CD8-positive, alpha-beta T cell (primary cell): ENCODE measurements at regions of chr10 and their contacts with region 1.

Region 1: DNA sequence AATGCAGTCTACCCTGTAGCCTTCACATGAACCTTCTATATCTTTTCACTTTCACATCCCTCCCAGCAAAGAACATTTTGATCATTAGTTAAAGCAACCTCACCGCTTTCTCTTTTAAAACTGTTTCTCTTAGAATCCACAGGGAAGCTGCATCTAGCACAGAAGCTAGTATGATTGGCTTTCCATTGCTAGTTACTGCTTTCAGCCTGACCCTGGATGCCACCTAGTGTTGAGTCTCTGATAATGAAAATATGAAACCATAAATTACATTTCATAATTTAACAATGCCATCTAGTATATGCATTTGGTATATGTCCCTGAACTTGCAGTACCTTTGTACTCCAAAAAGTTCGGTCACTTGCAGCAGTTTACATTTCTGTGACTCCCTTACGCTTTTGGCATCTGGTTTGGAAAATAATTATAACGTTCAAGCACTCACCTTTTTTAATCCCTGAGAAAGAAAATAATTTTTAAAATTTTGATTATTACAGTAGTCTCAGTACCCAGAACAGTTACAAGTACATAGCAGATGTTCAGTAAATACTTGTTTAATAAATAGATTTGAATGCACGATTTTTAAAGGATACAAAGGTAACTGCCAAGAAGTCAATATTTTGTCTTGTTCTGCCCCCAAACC is 22.7 kb downstream of the CISD1 start:
- DNase-seq: peak in 6 of 9 experiments; percentile 14 to 67 (median 28)
- ATAC-seq: peak; percentile 73
- H3K4me3 ChIP-seq: no peak overlapping the region
- H3K4me3 Mint-ChIP-seq: no peak overlapping the region
- H3K27ac ChIP-seq: no peak overlapping the region
- H3K27ac Mint-ChIP-seq: no peak overlapping the region
- H3K4me1 ChIP-seq: no peaks in the 10 kb centered on the region
- H3K4me1 Mint-ChIP-seq: no peaks in the 10 kb centered on the region
- H3K27me3 ChIP-seq: no peaks in the 10 kb centered on the region
- H3K27me3 Mint-ChIP-seq: no peaks in the 10 kb centered on the region
- CTCF ChIP-seq: peak; percentile 83

Region 2: DNA sequence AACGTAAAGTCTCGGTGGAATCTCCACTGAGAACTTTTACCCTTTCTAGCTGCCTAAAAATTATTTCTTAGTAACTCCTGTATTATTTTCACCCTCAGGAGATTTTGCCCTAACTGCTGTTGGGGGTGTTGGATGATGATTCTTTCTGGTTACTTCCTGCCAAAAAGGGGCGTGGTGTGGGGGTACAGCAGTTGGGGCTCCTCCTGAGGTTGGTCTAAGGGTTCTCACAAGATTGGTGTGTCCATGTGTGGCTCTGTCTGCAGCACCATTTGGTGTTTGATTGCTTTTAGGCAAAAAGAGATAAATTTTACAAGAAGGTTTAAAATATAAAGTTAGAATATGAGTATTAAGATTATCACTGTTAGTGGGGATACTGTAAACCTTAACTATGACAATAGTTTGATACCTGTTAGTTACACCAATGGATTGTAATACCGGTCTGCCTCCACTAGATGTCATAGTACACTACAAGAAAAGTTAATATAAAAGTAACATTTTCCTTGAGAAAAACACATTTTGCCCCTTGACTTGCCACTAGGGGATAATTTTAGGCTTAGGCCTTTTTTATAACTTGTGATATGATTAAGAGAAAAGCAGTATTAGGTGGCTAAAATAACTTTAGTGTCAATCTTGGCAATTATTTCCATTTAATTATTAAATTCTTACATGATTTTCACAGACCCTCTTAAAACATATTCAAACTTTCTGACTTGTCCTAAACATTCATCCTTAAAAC is 952.7 kb before region 1 on chr10:
- CTCF ChIA-PET with region 1: no interaction called
- POLR2A ChIA-PET with region 1: no interaction called
- intact Hi-C with region 1: loop called in 1 of 2 experiments (anchors 5 kb)
- DNase-seq: peak in 2 of 9 experiments; percentile 2 to 9
- ATAC-seq: no peak
- H3K4me3 ChIP-seq: no peak overlapping the region
- H3K4me3 Mint-ChIP-seq: no peak overlapping the region
- H3K27ac ChIP-seq: no peak overlapping the region
- H3K27ac Mint-ChIP-seq: no peak overlapping the region
- H3K4me1 ChIP-seq: no peaks in the 10 kb centered on the region
- H3K4me1 Mint-ChIP-seq: no peaks in the 10 kb centered on the region
- H3K27me3 ChIP-seq: no peaks in the 10 kb centered on the region
- H3K27me3 Mint-ChIP-seq: no peaks in the 10 kb centered on the region
- CTCF ChIP-seq: peak; percentile 34

Region 3: GRCh38 chr10:58177362-58177947 is 114.2 kb before region 1 on chr10:
- CTCF ChIA-PET with region 1: interaction called, 134 read pairs
- POLR2A ChIA-PET with region 1: no interaction called
- intact Hi-C with region 1: loop called (anchors 1 kb)
- DNase-seq: peak in 2 of 9 experiments; percentile 13 to 48
- ATAC-seq: no peak
- H3K4me3 ChIP-seq: no peak overlapping the region
- H3K4me3 Mint-ChIP-seq: no peak overlapping the region
- H3K27ac ChIP-seq: no peak overlapping the region
- H3K27ac Mint-ChIP-seq: no peak overlapping the region
- H3K4me1 ChIP-seq: no peaks in the 10 kb centered on the region
- H3K4me1 Mint-ChIP-seq: no peaks in the 10 kb centered on the region
- H3K27me3 ChIP-seq: no peaks in the 10 kb centered on the region
- H3K27me3 Mint-ChIP-seq: peaks cover 7% of the 10 kb centered on the region
- CTCF ChIP-seq: peak; percentile 71

Region 4: DNA sequence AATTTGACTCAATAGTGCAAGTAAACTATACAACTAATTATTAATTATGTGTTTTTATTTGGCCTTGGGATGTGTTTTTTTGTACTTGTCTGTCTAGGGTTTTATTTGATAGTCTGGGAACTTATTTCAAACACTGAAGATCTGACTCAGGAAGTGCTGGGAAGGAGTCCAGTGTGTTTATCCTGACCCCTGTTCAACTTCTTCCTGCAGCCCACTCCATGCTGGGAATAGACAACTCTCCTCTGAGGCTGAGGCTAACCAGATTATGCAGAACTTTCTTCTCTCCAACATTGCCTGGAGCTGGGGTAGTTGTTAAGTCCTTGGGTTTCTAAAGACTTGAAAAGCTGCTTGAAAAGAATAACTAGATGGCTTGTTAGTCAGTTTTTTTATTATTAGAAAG is 15.7 kb before region 1 on chr10:
- CTCF ChIA-PET with region 1: interaction called, 10 read pairs
- POLR2A ChIA-PET with region 1: interaction called, 3 read pairs
- intact Hi-C with region 1: no loop called
- DNase-seq: no peak
- ATAC-seq: no peak
- H3K4me3 ChIP-seq: no peak overlapping the region
- H3K4me3 Mint-ChIP-seq: no peak overlapping the region
- H3K27ac ChIP-seq: no peak overlapping the region
- H3K27ac Mint-ChIP-seq: no peak overlapping the region
- H3K4me1 ChIP-seq: no peaks in the 10 kb centered on the region
- H3K4me1 Mint-ChIP-seq: peaks cover 3% of the 10 kb centered on the region
- H3K27me3 ChIP-seq: no peaks in the 10 kb centered on the region
- H3K27me3 Mint-ChIP-seq: no peaks in the 10 kb centered on the region
- CTCF ChIP-seq: no peak

Region 5: GRCh38 chr10:58305821-58306220 is 14.2 kb after region 1 on chr10:
- CTCF ChIA-PET with region 1: interaction called, 21 read pairs
- POLR2A ChIA-PET with region 1: no interaction called
- intact Hi-C with region 1: no loop called
- DNase-seq: no peak
- ATAC-seq: no peak
- H3K4me3 ChIP-seq: no peak overlapping the region
- H3K4me3 Mint-ChIP-seq: no peak overlapping the region
- H3K27ac ChIP-seq: no peak overlapping the region
- H3K27ac Mint-ChIP-seq: no peak overlapping the region
- H3K4me1 ChIP-seq: no peaks in the 10 kb centered on the region
- H3K4me1 Mint-ChIP-seq: no peaks in the 10 kb centered on the region
- H3K27me3 ChIP-seq: peaks cover 0 to 8% of the 10 kb centered on the region in 2 experiments
- H3K27me3 Mint-ChIP-seq: peaks cover 30% of the 10 kb centered on the region
- CTCF ChIP-seq: no peak

Region 6: DNA sequence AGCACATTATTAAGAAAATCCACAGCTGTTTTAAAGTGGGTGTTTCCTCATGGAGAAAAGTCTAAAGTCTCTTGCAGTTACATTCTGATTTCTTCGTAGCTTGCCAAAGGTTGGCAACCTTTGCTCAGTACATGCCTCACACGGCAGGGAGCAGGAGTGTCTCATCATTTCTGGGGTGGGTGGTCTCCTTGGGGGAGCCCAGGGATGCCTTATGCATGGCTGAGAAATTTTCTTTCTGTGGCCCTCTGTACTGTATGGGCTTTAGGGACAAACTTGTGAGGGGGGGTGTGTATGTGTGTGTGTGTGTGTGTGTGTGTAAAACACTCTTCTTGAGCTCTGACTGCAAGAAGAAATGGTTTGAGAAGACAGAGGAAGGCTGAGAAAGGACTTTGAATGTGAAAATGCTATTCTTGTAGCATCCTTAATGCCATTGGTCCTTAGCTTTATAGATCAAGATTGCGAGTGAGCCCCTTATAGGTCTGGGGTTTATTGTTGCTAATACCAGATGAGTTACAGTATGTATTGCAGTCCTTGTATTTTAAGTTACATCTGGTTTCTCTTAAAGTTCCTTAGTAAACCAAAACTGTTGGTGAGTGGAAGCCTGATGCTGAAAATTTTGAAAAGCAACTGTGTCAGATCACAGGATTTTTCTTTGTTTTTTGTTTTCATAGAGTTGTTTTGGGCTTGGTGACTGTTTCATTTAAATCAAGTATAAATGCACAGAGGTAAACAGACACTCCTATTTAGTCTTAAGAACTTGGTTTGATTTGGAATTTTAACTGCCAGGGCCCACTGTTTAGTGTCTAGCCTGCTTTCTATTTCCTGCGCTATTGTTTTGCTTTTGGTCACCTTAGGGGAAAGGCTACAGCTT is 463.0 kb after region 1 on chr10:
- CTCF ChIA-PET with region 1: no interaction called
- POLR2A ChIA-PET with region 1: no interaction called
- intact Hi-C with region 1: no loop called
- DNase-seq: no peak
- ATAC-seq: no peak
- H3K4me3 ChIP-seq: no peak overlapping the region
- H3K4me3 Mint-ChIP-seq: no peak overlapping the region
- H3K27ac ChIP-seq: no peak overlapping the region
- H3K27ac Mint-ChIP-seq: no peak overlapping the region
- H3K4me1 ChIP-seq: no peaks in the 10 kb centered on the region
- H3K4me1 Mint-ChIP-seq: no peaks in the 10 kb centered on the region
- H3K27me3 ChIP-seq: no peaks in the 10 kb centered on the region
- H3K27me3 Mint-ChIP-seq: no peaks in the 10 kb centered on the region
- CTCF ChIP-seq: no peak